Caco-2 (cell line): ENCODE measurements at regions of chr7 and their contacts with region 1.

Region 1: DNA sequence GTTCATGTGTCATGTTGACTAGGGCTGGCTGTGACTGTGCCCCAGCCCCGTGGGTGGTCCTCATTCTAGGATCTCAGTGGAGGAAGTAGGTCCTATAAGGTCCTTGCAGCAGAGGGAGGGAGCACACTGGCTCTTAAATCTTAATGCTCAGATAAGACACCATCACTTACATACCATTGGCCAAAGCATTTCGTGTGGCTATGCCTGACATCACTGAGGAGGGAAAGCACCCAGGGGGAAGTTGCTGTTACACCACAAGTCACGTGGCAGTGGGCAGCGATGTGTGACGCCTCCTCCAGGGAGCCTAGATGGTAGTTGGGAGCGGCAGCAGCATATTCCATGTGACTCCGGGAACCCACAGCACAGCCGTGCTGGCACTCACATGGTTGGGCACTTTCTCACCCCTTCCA is 224.7 kb upstream of the SH2B2 start:
- DNase-seq: no peak
- H3K4me3 ChIP-seq: no peak overlapping the region
- H3K4me3 Mint-ChIP-seq: no peak overlapping the region
- H3K27ac Mint-ChIP-seq: peak overlapping the region; percentile 77
- H3K4me1 ChIP-seq: peaks cover 18% of the 10 kb centered on the region
- H3K4me1 Mint-ChIP-seq: peaks cover 19% of the 10 kb centered on the region
- H3K27me3 ChIP-seq: no peaks in the 10 kb centered on the region
- H3K27me3 Mint-ChIP-seq: no peaks in the 10 kb centered on the region
- CTCF ChIP-seq: no peak

Region 2: DNA sequence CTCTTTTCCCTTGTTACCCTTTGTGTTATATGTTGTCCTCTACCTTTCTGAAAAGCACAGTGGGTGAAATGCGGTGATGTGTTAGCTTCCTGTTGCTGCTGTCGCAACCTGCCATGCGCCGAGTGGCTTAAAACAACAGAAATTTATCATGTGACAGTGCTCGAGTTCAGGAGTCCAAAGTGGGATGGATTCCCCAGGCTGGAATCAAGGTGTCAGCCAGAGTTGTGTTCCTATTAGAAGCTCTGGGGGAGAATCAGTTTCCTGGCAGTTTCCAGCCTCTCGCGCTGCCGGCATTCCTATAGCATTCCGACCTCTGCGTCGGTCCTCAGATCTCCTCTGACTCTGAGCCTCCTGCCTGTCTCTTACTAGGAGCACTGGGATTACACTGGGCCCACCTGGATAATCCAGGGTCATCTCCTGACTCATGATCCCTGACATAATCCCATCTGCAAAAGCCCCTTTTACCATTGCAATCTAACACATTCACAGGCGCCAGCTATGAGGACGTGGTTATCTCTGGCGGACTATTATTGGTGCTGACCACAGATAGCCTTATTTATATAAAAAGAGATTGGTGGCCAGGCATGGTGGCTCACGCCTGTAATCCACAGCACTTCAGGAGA is 37.1 kb before region 1 on chr7:
- CTCF ChIA-PET with region 1: interaction called, 3 read pairs
- POLR2A ChIA-PET with region 1: no interaction called
- intact Hi-C with region 1: loop called (anchors 5 kb)
- DNase-seq: peak; percentile 85 to 90
- H3K4me3 ChIP-seq: no peak overlapping the region
- H3K4me3 Mint-ChIP-seq: peak overlapping the region; percentile 54
- H3K27ac Mint-ChIP-seq: peak overlapping the region; percentile 78
- H3K4me1 ChIP-seq: peaks cover 51% of the 10 kb centered on the region
- H3K4me1 Mint-ChIP-seq: peaks cover 42% of the 10 kb centered on the region
- H3K27me3 ChIP-seq: no peaks in the 10 kb centered on the region
- H3K27me3 Mint-ChIP-seq: no peaks in the 10 kb centered on the region
- CTCF ChIP-seq: no peak